ENCODE measurements at regions of chr14 and their contacts with region 1.

Region 1: DNA sequence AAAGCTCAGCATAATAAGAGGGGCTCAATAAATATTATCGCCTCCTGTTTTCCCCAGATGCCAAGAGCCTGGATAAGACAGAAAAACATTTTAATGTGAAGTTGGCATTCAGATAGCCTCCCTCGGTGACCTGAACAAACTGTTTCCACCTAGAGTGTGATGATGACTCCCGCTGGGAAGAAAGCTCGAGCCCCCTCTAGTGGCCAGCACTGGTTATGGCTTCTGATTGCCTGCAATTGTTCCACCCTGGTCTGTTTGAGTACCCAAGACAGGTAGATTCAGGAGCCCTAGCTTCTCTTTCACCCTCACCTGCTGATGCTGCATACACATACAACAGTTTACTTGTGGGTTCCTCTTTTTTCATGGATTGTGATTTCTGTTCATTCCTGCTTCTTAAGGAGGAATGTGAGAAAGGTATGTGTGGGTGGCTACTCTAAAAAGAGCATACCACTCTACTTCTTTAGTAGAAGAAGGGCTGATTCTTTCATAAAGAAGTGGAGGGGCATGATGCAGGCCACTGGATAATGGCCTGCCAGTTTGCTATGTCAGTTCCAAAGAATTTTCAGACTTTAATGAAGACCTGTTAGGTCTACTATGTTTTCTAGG is 6.4 kb downstream of the ERG28 start:
- DNase-seq: peak; percentile 77
- H3K4me3 ChIP-seq: no peak overlapping the region
- H3K27ac ChIP-seq: no peak overlapping the region
- H3K4me1 ChIP-seq: peaks cover 6% of the 10 kb centered on the region
- H3K27me3 ChIP-seq: no peaks in the 10 kb centered on the region
- CTCF ChIP-seq: peak; percentile 92 to 94
- POLR2A ChIP-seq: no peak

Region 2: GRCh38 chr14:75577729-75578101 is 76.5 kb before region 1 on chr14:
- CTCF ChIA-PET with region 1: interaction called, 309 read pairs
- POLR2A ChIA-PET with region 1: no interaction called
- dilution Hi-C with region 1: no loop called
- intact Hi-C with region 1: loop called (anchors 1 kb)
- DNase-seq: peak; percentile 82
- H3K4me3 ChIP-seq: peak overlapping the region; percentile 50 to 83 (median 64)
- H3K27ac ChIP-seq: no peak overlapping the region
- H3K4me1 ChIP-seq: peaks cover 18% of the 10 kb centered on the region
- H3K27me3 ChIP-seq: peaks cover 0 to 4% of the 10 kb centered on the region in 2 experiments
- CTCF ChIP-seq: peak; percentile 70 to 83
- POLR2A ChIP-seq: no peak

Region 3: DNA sequence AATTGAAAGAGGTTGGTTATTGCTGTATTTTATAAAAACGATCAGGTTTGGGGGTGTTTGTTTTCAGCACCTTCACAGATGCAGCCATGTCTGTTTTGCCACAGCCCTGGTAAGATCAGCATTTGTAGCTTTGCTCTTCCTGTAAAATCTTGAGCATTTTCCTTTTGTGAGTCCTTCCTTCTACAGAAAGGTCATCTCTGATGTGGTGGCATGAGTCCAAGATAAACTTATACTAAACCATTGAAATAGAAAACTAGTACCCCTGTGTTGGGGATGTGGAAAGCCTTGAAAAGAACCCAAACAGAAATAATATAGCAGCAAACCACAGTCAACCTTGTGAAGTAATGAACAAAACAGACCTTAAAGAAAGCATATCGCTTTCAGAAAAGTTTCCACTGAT is 242.1 kb after region 1 on chr14:
- CTCF ChIA-PET with region 1: no interaction called
- POLR2A ChIA-PET with region 1: no interaction called
- dilution Hi-C with region 1: no loop called
- intact Hi-C with region 1: no loop called
- DNase-seq: peak; percentile 61
- H3K4me3 ChIP-seq: no peak overlapping the region
- H3K27ac ChIP-seq: no peak overlapping the region
- H3K4me1 ChIP-seq: peaks cover 12% of the 10 kb centered on the region
- H3K27me3 ChIP-seq: no peaks in the 10 kb centered on the region
- CTCF ChIP-seq: no peak
- POLR2A ChIP-seq: no peak